ENCODE measurements at regions of chr17 and their contacts with region 1.

Region 1: DNA sequence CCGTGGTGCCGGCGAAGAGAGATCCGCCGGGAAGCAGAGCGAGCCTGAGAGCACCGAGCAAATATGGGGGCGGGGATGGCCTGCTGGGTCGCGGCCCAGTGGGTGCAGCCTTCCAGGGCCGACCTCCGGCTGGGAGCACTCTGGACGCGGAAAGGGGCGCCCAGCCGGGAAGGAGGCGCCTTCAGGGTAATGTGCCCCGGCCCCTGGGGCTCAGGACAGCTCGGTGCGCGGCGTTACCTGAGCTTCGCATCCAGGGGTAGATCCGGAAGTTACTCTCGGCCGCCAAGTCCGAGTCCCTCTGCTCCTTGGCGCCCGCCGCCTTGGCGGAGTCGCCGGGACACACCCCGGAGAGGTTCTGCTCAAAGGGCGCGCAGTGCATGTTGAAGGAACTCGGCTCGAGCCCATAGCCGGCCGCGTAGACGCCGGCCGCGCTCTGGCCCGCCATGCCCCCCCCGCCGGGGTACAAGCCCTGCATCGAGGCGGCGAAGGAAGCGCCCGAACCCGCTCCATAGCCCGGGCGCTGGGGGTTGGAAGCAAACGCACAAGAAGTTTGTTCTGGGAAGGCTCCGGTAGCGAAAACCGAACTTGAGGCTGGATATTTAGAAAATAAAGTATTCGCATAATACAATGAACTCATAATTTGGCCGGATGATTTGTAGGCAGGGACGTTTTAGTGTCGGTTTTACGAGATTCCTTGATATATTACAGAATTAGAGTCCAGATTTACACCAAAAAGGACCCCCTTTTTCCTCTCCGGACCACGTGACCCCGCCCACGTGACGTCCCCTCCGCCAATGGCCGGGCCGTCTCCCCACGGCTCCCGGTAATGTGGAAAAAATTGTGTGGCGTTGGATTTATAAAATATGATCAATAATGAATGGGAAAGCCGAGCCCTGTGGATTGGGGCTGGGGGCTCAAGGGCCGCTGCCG is at the start of gene HOXB7:
- DNase-seq: no peak
- H3K4me3 Mint-ChIP-seq: peak within 1 kb of the TSS; percentile 84
- H3K27ac Mint-ChIP-seq: peak within 1 kb of the TSS; percentile 61
- H3K4me1 Mint-ChIP-seq: peaks cover 29% of the 10 kb centered on the region
- H3K27me3 Mint-ChIP-seq: peaks cover 77% of the 10 kb centered on the region
- total RNA-seq, gene HOXB7: 0.39 and 0.64 TPM in 2 replicates

Region 2: GRCh38 chr17:48406936-48407567 is 203.5 kb before region 1 on chr17:
- intact Hi-C with region 1: no loop called
- DNase-seq: no peak
- H3K4me3 Mint-ChIP-seq: peak overlapping the region; percentile 13
- H3K27ac Mint-ChIP-seq: peak overlapping the region; percentile 84
- H3K4me1 Mint-ChIP-seq: peaks cover 43% of the 10 kb centered on the region
- H3K27me3 Mint-ChIP-seq: no peaks in the 10 kb centered on the region

Region 3: DNA sequence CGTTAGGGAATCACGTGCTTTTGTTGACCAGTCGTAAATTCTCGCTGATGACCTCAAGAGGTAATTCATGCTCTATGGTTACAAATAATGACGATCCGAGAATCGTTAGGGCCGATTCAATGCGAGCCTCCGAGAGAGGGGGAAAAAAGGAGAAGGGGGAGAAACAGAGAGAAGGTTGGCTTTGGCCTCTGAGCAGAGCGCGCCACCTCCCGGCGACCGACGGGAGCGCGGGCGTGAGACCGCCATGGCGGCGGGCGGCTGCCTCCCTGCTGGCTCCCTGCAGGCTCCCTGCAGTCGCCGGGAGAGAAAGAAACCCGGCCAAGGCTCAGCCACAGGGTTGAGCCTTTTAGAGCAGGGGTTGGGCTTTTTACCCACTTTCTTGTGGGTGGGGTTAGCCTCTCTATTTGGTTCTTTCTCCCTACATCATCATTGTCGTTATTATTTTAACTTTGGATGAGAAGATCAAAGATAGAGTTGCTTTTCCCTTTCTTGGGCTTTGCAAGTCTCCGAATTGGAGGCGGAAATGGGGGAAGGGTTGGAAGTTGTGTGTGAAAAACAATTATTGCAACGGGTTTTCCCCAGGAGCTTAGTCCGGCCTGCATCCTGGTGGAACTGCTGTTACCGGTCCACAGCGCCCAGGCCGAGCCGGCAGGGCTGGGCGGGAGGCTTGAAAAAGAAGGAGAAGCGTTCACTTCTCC is 16.6 kb before region 1 on chr17:
- intact Hi-C with region 1: loop called (anchors 1 kb)
- DNase-seq: peak; percentile 78
- H3K4me3 Mint-ChIP-seq: peak overlapping the region; percentile 76
- H3K27ac Mint-ChIP-seq: no peak overlapping the region
- H3K4me1 Mint-ChIP-seq: peaks cover 43% of the 10 kb centered on the region
- H3K27me3 Mint-ChIP-seq: peaks cover 86% of the 10 kb centered on the region

Region 4: GRCh38 chr17:48646183-48647102 is 35.9 kb after region 1 on chr17:
- intact Hi-C with region 1: loop called (anchors 5 kb)
- DNase-seq: no peak
- H3K4me3 Mint-ChIP-seq: peak overlapping the region; percentile 75
- H3K27ac Mint-ChIP-seq: no peak overlapping the region
- H3K4me1 Mint-ChIP-seq: peaks cover 14% of the 10 kb centered on the region
- H3K27me3 Mint-ChIP-seq: peaks cover 75% of the 10 kb centered on the region

Region 5: DNA sequence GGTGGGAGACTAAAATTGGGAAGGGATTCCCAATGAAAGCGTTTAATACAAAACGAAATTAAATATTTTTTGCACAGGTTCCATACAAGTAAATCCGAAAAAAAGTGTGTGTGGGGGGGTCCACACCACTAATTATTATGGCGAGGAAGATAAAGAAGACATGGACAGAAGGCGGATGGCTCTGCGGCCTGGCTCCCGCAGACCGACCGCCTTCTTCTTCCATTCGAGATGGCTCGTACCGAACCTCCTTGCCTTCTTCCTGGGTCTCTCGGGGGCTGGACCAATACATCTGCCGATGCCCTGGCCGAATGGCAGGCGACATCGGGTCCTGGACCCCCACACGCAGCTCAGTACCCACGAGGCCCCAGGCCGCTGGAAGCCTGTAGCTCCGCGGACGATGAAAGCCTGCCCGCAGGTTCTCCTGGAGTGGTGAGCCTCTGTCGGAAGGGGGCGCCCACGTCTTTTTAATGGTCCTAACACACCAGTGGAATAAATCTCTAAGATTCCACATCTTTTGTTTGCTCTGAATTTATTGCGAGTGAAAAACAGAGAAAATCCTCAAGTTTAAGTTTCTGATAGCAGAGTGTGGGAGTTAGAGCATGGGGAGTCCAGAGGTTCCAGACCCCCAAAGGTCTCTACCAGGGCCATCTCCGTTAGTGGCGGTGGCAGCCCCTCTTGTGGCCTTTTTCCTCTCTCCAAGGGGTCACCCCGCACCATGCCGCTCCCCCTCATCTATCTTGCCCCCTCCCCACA is 113.9 kb after region 1 on chr17:
- intact Hi-C with region 1: loop called (anchors 2 kb)
- DNase-seq: peak; percentile 68
- H3K4me3 Mint-ChIP-seq: no peak overlapping the region
- H3K27ac Mint-ChIP-seq: no peak overlapping the region
- H3K4me1 Mint-ChIP-seq: peaks cover 12% of the 10 kb centered on the region
- H3K27me3 Mint-ChIP-seq: peaks cover 89% of the 10 kb centered on the region

Region 6: GRCh38 chr17:48753794-48754499 is 143.4 kb after region 1 on chr17:
- intact Hi-C with region 1: loop called (anchors 2 kb)
- DNase-seq: no peak
- H3K4me3 Mint-ChIP-seq: no peak overlapping the region
- H3K27ac Mint-ChIP-seq: no peak overlapping the region
- H3K4me1 Mint-ChIP-seq: no peaks in the 10 kb centered on the region
- H3K27me3 Mint-ChIP-seq: peaks cover 83% of the 10 kb centered on the region

Region 7: GRCh38 chr17:48997083-48997826 is 386.7 kb after region 1 on chr17 and contains the start of gene IGF2BP1:
- intact Hi-C with region 1: loop called (anchors 5 kb)
- DNase-seq: no peak
- H3K4me3 Mint-ChIP-seq: peak within 1 kb of the TSS; percentile 30
- H3K27ac Mint-ChIP-seq: peak within 1 kb of the TSS; percentile 39
- H3K4me1 Mint-ChIP-seq: peaks cover 9% of the 10 kb centered on the region
- H3K27me3 Mint-ChIP-seq: peaks cover 81% of the 10 kb centered on the region
- total RNA-seq, gene IGF2BP1: 0.09 and 0.32 TPM in 2 replicates

Measured in activated T-helper 2 cell treated with anti-CD3 and anti-CD28 coated beads, Interferon-gamma antibody, Interleukin-2, Interleukin-4, amounts not matched to agents 10 μg/mL and 5 μg/mL and 100 μg/mL, durations not matched to agents 14 hours and 24 hours and 36 hours (primary cell).